ENCODE measurements at regions of chr20 and their contacts with region 1.

Region 1: GRCh38 chr20:26295006-26295405 is 598.4 kb upstream of the ZNF337 start:
- DNase-seq: no peak
- H3K4me3 Mint-ChIP-seq: no peak overlapping the region
- H3K27ac Mint-ChIP-seq: no peak overlapping the region
- H3K4me1 Mint-ChIP-seq: peaks cover 9% of the 10 kb centered on the region
- H3K27me3 Mint-ChIP-seq: no peaks in the 10 kb centered on the region

Region 2: GRCh38 chr20:25659999-25660398 is 635.0 kb before region 1 on chr20:
- intact Hi-C with region 1: no loop called
- DNase-seq: no peak
- H3K4me3 Mint-ChIP-seq: no peak overlapping the region
- H3K27ac Mint-ChIP-seq: no peak overlapping the region
- H3K4me1 Mint-ChIP-seq: peaks cover 12% of the 10 kb centered on the region
- H3K27me3 Mint-ChIP-seq: no peaks in the 10 kb centered on the region

Region 3: GRCh38 chr20:26208296-26209091 is 86.5 kb before region 1 on chr20:
- intact Hi-C with region 1: loop called (anchors 5 kb)
- DNase-seq: peak; percentile 18
- H3K4me3 Mint-ChIP-seq: peak overlapping the region; percentile 47
- H3K27ac Mint-ChIP-seq: no peak overlapping the region
- H3K4me1 Mint-ChIP-seq: peaks cover 14% of the 10 kb centered on the region
- H3K27me3 Mint-ChIP-seq: peaks cover 20% of the 10 kb centered on the region

Region 4: DNA sequence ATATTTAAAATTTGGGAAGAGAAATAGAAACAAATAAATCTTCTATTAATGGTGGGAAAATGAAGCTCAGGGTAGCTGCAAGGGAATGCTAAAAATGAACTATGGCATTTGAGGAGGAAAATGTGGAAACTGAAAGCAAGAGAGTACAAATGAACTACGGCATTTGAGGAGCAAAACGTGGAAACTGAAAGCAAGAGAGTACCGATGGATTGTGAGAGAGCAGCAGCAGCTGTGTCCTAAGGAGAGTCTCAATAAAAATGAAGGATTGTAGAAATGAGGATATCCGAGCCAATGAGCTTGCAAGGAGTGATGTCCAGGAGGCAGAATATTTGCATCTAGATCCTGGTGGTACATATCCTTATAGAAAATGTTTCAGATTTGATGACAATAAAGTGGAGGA is 51.3 kb before region 1 on chr20:
- intact Hi-C with region 1: no loop called
- DNase-seq: no peak
- H3K4me3 Mint-ChIP-seq: no peak overlapping the region
- H3K27ac Mint-ChIP-seq: no peak overlapping the region
- H3K4me1 Mint-ChIP-seq: no peaks in the 10 kb centered on the region
- H3K27me3 Mint-ChIP-seq: peaks cover 2% of the 10 kb centered on the region

Region 5: DNA sequence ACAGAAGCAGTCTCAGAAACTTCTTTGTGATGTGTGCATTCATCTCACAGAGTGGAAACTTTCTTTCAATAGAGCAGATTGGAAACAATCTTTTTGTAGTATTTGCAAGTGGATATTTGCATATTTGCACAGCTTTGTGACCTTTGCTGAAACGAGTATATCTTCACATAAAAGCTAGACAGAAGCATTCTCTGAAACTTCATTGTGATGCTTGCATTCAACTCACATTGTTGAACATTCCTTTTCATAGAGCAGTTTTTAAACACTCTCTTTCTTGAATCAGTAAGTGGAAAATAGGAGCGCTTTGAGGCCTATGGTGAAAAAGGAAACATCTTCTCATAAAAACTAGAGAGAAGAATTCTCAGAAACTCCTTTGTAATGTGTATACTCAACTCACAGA is 59.5 kb after region 1 on chr20:
- intact Hi-C with region 1: no loop called
- DNase-seq: no peak
- H3K4me3 Mint-ChIP-seq: no peak overlapping the region
- H3K27ac Mint-ChIP-seq: no peak overlapping the region
- H3K4me1 Mint-ChIP-seq: no peaks in the 10 kb centered on the region
- H3K27me3 Mint-ChIP-seq: no peaks in the 10 kb centered on the region

Measured in activated T-helper 1 cell treated with anti-CD3 and anti-CD28 coated beads, Interleukin-12 subunit alpha, Interleukin-12 subunit beta, Interleukin-2, Interleukin-4 antibody, amounts not matched to agents 30 ng/mL and 10 ng/mL and 1 ng/mL, durations not matched to agents 14 hours and 24 hours and 36 hours (primary cell).